Gastrocnemius medialis (tissue), 4 donors: ENCODE measurements at regions of chr19 and their contacts with region 1.

Region 1: GRCh38 chr19:50376166-50377050 is at the start of gene NR1H2:
- DNase-seq: peak; percentile 93 to 94
- ATAC-seq: peak; percentile 98
- H3K4me3 ChIP-seq: peak within 1 kb of the TSS; percentile 71 to 99 (median 96)
- H3K27ac ChIP-seq: peak within 1 kb of the TSS; percentile 95 to 100 (median 99)
- H3K4me1 ChIP-seq: peaks cover 8 to 12% of the 10 kb centered on the region in 2 donors
- H3K27me3 ChIP-seq: no peaks in the 10 kb centered on the region
- CTCF ChIP-seq: no peak
- POLR2A ChIP-seq: peak; percentile 76 to 83
- total RNA-seq, gene NR1H2: 155 to 232 (median 200) TPM

Region 2: GRCh38 chr19:50230379-50231351 is 145.7 kb before region 1 on chr19:
- in situ Hi-C with region 1: no loop called
- intact Hi-C with region 1: no loop called
- DNase-seq: peak in 1 of 2 donors; percentile 38
- ATAC-seq: no peak
- H3K4me3 ChIP-seq: no peak overlapping the region
- H3K27ac ChIP-seq: peak overlapping the region; percentile 17 to 91 (median 57)
- H3K4me1 ChIP-seq: peaks cover 14 to 20% of the 10 kb centered on the region in 2 donors
- H3K27me3 ChIP-seq: no peaks in the 10 kb centered on the region
- CTCF ChIP-seq: no peak
- POLR2A ChIP-seq: no peak

Region 3: DNA sequence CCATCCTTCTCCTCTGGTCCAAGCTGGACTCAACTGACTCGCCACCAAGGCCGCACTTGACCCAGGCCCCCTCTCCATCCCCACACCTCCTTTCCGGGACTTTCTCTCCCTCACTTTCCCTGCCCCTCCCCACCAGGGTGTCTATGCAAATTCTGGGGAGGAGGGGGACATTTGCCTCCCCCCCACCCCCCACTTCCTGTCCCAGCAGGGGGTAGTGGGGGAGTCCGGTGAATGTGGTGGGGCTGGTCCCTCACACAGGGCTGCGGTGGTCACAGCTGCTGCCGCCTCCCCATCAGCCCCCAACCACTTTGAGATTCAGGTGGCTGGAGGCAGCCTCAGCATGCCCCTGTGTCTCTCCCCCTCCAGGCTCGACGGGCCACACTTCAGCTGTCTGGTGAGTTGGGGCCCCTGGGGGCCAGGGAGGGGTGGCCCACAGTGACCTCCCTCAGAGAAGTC is 43.2 kb after region 1 on chr19:
- in situ Hi-C with region 1: no loop called
- intact Hi-C with region 1: no loop called
- DNase-seq: no peak
- ATAC-seq: no peak
- H3K4me3 ChIP-seq: no peak overlapping the region
- H3K27ac ChIP-seq: no peak overlapping the region
- H3K4me1 ChIP-seq: peaks cover 0 to 8% of the 10 kb centered on the region in 2 donors
- H3K27me3 ChIP-seq: peaks cover 2 to 22% (median 11%) of the 10 kb centered on the region in 3 donors
- CTCF ChIP-seq: no peak
- POLR2A ChIP-seq: no peak

Region 4: GRCh38 chr19:50431343-50432220 is 55.2 kb after region 1 on chr19:
- in situ Hi-C with region 1: no loop called
- intact Hi-C with region 1: loop called (anchors 2 kb)
- DNase-seq: peak; percentile 73 to 81
- ATAC-seq: peak; percentile 77 to 88
- H3K4me3 ChIP-seq: peak overlapping the region; percentile 66 to 94 (median 78)
- H3K27ac ChIP-seq: peak overlapping the region; percentile 85 to 94 (median 88)
- H3K4me1 ChIP-seq: peaks cover 12 to 22% of the 10 kb centered on the region in 2 donors
- H3K27me3 ChIP-seq: peaks cover 4 to 14% (median 10%) of the 10 kb centered on the region in 3 donors
- CTCF ChIP-seq: no peak
- POLR2A ChIP-seq: peak; percentile 25 to 33

Region 5: DNA sequence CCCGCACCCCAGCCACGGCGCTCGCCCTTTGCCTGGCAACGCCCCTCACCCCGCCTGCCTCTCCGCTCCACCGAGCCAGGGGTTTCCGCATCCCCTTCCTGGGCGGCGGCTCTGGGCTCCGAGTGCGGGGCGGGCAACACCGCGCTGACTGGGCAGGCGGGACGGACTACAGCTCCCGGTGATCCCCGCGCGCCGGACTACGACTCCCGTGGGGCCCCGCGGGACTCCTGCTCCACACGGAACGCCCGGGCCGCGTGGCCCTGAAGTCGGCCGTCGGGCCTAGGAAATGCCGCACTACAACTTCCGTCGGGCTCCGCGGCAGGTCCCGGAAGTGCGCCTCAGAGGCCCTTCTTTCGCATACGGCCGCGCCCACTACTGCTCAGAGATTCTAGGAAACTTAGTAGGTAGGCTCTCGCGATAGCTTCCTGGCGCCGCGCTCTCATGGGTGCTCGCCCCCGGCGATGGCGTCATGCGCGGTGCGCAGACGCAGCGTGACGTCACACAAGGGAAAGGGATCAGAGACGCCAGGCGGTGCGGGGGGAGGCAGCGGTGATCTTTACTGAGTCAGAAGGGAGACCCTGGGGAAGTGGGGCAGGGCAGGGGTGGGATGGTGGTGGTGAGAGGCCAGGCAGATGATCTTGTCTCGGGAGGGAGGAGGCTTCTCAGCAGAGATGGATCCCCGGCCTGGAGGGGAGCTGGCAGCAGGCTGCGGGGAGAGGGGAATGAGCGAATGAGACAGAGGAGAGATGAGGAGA is 134.8 kb after region 1 on chr19 and contains the start of gene JOSD2:
- in situ Hi-C with region 1: no loop called
- intact Hi-C with region 1: loop called (anchors 2 kb)
- DNase-seq: peak; percentile 95 to 98
- ATAC-seq: peak; percentile 92 to 94
- H3K4me3 ChIP-seq: peak within 1 kb of the TSS; percentile 87 to 92 (median 88)
- H3K27ac ChIP-seq: peak within 1 kb of the TSS; percentile 79 to 89 (median 85)
- H3K4me1 ChIP-seq: peaks cover 7 to 13% of the 10 kb centered on the region in 2 donors
- H3K27me3 ChIP-seq: peaks cover 0 to 4% (median 0%) of the 10 kb centered on the region in 3 donors
- CTCF ChIP-seq: peak in 2 of 5 experiments; percentile 21 to 22
- POLR2A ChIP-seq: peak; percentile 68 to 81
- total RNA-seq, gene JOSD2: 22.1 to 36.9 (median 27.8) TPM